Aorta (tissue), 5 donors: ENCODE measurements at regions of chr17 and their contacts with region 1.

Region 1: DNA sequence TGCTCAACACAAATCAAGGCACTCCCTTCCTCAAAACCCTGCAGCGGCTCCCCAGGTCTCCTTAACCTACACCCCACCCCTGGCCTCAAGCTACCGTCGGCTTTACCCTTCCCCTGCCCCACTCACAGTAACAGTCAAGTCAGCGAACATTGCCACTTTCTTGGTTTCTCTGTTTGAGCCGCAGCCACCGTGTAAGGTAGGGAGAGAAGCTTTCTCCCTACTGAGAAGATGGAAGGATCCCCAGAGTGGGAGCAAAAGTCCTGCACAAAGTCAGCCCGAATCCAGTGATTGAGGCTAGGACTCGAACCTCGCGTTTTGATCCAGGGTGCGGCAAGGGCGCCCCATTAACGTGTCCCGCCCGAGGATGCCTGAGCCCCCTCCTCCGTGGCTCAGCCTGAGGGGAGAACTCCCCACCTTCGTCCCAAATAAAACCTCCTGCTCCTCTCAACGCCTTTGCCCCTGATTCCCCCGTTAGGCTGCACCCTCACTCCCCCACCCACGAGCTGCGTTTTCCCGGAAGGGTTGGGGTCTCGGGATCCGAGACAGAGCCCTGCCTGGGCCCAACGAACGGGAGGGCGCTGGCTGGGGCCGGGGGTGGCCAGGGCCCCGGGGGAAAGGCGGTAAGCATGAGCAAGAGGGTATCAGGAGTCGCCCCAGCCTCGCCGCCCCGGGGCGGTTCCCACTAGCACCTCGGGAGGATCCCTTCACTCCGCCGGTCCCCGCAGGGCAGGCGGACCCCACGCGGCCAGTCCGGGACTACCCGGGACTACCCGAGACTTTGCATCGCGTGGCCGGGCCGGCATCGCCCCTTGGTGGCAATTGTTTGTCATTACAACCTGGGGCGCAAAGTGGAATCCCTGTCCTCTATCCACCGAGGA is 9.9 kb upstream of the NAGS start:
- DNase-seq: peak; percentile 70 to 88
- ATAC-seq: peak; percentile 75
- H3K4me3 ChIP-seq: no peak overlapping the region
- H3K27ac ChIP-seq: no peak overlapping the region
- H3K4me1 ChIP-seq: no peaks in the 10 kb centered on the region
- H3K27me3 ChIP-seq: no peaks in the 10 kb centered on the region

Region 2: GRCh38 chr17:43878260-43879175 is 116.0 kb before region 1 on chr17:
- intact Hi-C with region 1: loop called in 1 of 2 experiments (anchors 10 kb)
- DNase-seq: peak; percentile 73 to 91
- ATAC-seq: peak; percentile 83
- H3K4me3 ChIP-seq: no peak overlapping the region
- H3K27ac ChIP-seq: no peak overlapping the region
- H3K4me1 ChIP-seq: no peaks in the 10 kb centered on the region
- H3K27me3 ChIP-seq: no peaks in the 10 kb centered on the region

Region 3: GRCh38 chr17:43940630-43941029 is 53.9 kb before region 1 on chr17:
- intact Hi-C with region 1: loop called in 1 of 2 experiments (anchors 2 kb)
- DNase-seq: no peak
- ATAC-seq: no peak
- H3K4me3 ChIP-seq: no peak overlapping the region
- H3K27ac ChIP-seq: no peak overlapping the region
- H3K4me1 ChIP-seq: no peaks in the 10 kb centered on the region
- H3K27me3 ChIP-seq: no peaks in the 10 kb centered on the region